Activated CD8-positive, alpha-beta T cell treated with anti-CD3 and anti-CD28 coated beads for 36 hours (primary cell): ENCODE measurements at regions of chr9 and their contacts with region 1.

Region 1: DNA sequence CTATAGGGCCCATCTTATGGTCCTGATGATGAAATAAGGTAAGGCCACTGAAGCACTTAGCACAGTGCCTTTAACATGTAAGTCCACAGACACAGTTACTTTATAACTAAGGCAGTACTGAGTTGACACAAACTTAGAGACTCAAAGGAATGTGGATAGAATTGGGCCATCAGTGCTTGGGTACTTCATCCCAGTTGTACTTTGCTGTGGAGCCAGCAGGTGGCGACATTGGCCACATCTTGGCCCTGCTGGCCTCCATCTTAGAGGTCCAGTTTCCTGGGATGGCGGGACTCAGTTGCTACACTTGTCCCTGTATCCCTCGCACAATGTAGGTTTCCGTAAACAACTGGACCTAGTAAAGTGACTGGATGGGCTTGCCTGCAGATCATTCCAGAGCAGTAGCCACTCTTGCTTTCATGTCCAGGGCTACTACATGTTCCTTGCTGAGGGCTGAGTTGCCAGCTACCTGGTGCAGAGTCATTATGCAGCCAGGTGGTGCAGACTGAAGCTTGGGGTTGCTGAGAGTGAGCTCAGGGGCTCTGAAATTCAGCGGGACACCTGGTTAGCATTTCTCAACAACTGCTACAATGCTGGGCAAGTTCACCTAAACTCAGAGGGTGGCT is 10.6 kb downstream of the MTAP start:
- DNase-seq: peak; percentile 72
- ATAC-seq: peak; percentile 71
- H3K4me3 Mint-ChIP-seq: no peak overlapping the region
- H3K27ac Mint-ChIP-seq: peak overlapping the region; percentile 69
- H3K4me1 Mint-ChIP-seq: peaks cover 42% of the 10 kb centered on the region
- H3K27me3 Mint-ChIP-seq: no peaks in the 10 kb centered on the region
- CTCF ChIP-seq: peak; percentile 85

Region 2: DNA sequence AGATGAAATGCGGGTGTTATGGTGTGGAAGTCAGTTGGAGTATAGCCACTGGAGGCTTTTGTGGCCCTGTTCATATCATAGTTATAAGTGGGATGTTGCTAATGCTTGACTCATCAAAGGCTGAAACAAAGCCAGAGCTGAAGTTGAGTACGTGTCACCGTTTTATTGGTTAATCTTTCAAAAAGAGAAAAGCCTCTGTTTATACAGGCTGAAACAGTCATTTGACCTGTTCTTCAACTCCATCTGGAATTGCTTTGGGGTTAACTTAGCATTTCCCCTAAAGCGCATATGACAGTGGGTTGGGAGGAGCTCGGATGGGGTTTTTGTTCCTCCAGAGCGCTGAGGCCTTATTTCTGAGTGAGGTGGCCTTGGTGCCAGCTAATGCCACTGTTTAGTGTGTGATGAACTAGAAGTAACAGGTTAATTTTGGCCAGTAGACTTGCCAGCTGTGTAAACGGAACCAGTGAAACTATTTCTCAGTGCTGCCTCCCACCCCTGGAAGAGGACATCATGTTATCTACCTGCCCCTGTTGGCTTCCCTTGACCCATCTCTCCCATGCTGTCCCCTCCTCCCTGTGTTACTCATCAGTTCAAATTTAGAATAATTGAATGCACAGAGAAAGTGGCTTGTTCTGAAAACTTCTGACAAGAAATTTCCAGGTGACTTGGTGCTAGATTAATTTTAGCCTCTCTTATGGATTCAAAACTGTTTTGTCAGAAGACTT is 23.5 kb after region 1 on chr9:
- CTCF ChIA-PET with region 1: interaction called, 18 read pairs
- POLR2A ChIA-PET with region 1: no interaction called
- intact Hi-C with region 1: no loop called
- DNase-seq: no peak
- ATAC-seq: no peak
- H3K4me3 Mint-ChIP-seq: no peak overlapping the region
- H3K27ac Mint-ChIP-seq: no peak overlapping the region
- H3K4me1 Mint-ChIP-seq: peaks cover 21% of the 10 kb centered on the region
- H3K27me3 Mint-ChIP-seq: no peaks in the 10 kb centered on the region
- CTCF ChIP-seq: no peak

Region 3: DNA sequence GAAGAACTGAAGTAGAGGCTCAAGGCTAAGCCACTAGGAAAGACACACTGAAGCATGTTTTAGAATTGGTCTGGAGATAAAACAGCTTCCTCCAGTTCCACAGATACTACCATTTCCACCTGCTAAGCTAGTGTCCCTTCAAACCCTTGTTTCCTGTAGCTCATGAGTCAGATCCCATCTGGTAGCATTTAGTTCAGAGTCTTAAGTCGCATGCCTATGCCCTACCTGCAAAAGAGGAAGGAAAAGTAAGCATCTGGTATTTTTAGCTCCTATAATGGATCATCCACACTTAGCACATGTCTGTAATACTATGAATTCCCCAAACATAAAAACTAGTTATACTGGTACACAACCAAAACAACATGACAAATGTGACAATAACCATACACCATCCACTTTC is 89.1 kb after region 1 on chr9:
- CTCF ChIA-PET with region 1: no interaction called
- POLR2A ChIA-PET with region 1: no interaction called
- intact Hi-C with region 1: no loop called
- DNase-seq: no peak
- ATAC-seq: no peak
- H3K4me3 Mint-ChIP-seq: no peak overlapping the region
- H3K27ac Mint-ChIP-seq: no peak overlapping the region
- H3K4me1 Mint-ChIP-seq: no peaks in the 10 kb centered on the region
- H3K27me3 Mint-ChIP-seq: no peaks in the 10 kb centered on the region
- CTCF ChIP-seq: no peak

Region 4: DNA sequence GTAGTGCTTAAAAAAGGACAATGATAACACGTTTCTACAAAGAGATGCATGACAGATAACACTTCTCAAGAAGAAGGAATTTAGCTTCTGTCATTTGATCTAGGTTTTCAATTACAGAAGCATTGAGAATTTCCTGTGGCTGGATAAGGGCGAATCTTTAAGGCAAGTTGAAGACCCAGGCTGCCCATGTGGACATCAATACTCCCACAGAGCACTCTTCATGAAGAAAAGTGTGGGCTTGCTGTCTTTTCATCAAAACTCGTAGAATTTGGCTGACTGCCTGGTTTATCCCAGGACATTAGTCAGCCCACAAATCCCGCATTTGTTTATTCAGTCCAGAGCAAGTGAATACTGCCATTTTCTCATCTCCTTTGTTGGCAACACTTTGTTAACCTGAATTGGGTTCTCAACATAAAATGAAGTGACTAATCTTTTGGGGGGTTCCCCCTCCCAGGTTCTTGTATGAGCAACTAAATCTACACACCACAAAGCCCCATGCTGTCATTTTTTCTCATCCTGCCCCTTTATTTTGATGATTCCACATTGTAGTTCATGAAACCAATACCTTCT is 239.4 kb after region 1 on chr9:
- CTCF ChIA-PET with region 1: interaction called, 17 read pairs
- POLR2A ChIA-PET with region 1: no interaction called
- intact Hi-C with region 1: loop called (anchors 5 kb)
- DNase-seq: peak; percentile 76
- ATAC-seq: peak; percentile 89
- H3K4me3 Mint-ChIP-seq: no peak overlapping the region
- H3K27ac Mint-ChIP-seq: peak overlapping the region; percentile 65
- H3K4me1 Mint-ChIP-seq: peaks cover 34% of the 10 kb centered on the region
- H3K27me3 Mint-ChIP-seq: no peaks in the 10 kb centered on the region
- CTCF ChIP-seq: no peak

Region 5: DNA sequence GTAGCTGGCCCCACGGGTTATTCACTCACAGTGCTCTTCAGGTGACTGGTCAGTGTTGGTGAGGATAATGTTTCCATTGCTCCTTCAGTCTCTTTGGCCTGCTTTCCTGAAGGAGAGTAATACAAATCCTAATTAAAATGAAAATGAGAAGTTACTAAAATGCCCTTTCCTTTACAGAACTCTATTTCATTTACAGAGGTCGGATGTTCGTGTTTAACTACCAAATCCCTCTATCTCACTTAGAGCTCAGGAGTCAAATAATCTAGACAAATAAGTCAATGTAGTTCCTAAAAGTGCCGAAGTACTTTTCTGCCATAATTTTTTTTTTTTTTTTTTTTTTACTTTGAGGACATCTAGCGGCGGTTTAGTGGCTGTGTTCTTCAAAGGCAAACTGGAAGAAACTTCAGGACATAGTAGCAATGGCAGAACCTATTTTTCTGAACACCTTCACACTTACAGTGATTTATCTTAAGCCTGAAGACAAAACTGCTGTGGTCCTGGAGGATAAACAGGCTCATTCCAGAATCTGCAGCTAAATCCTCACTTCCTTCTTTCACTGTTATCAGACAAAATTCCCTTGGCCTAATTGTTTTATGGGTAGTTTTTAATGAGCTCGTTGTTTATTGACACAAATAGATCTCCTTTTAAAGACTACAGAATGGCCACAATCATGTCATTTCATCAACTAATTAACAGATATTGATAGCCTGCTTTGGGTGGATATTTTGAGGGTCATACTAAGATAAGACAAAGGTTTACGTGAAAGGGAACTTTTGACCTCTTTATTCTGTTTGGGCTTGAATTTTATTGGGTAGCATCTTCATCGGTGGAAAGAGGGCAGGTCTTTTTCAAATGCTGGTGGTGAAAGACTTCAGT is 426.0 kb after region 1 on chr9:
- CTCF ChIA-PET with region 1: interaction called, 32 read pairs
- POLR2A ChIA-PET with region 1: no interaction called
- intact Hi-C with region 1: loop called (anchors 2 kb)
- DNase-seq: no peak
- ATAC-seq: no peak
- H3K4me3 Mint-ChIP-seq: no peak overlapping the region
- H3K27ac Mint-ChIP-seq: no peak overlapping the region
- H3K4me1 Mint-ChIP-seq: peaks cover 53% of the 10 kb centered on the region
- H3K27me3 Mint-ChIP-seq: peaks cover 5% of the 10 kb centered on the region
- CTCF ChIP-seq: peak; percentile 34

Region 6: GRCh38 chr9:22452415-22453010 is 639.5 kb after region 1 on chr9:
- CTCF ChIA-PET with region 1: interaction called, 20 read pairs
- POLR2A ChIA-PET with region 1: no interaction called
- intact Hi-C with region 1: no loop called
- DNase-seq: peak; percentile 74
- ATAC-seq: peak; percentile 58
- H3K4me3 Mint-ChIP-seq: no peak overlapping the region
- H3K27ac Mint-ChIP-seq: no peak overlapping the region
- H3K4me1 Mint-ChIP-seq: no peaks in the 10 kb centered on the region
- H3K27me3 Mint-ChIP-seq: peaks cover 31% of the 10 kb centered on the region
- CTCF ChIP-seq: peak; percentile 91